Transverse colon (tissue), 4 donors: ENCODE measurements at regions of chr5 and their contacts with region 1.

Region 1: DNA sequence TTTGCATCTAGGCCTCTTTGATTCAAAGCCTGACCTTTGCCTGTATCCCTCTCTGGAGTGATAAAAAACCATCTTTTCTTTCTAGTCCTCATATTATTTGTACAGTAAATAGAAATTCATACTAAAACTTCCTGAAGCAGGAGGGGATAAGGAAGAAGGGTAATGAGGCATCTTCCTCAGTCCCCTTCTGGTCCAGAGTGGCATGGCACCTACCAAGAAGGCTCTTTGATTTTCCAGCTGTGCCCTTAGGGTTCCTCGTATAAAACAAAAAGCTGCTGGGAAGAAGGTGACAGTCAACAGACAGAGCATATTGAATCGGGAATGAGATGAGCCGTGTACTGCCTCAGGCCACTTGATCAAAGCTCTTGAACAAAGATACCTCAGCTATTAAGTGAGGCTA is 71.9 kb upstream of the SPDL1 start:
- DNase-seq: no peak
- H3K4me3 ChIP-seq: no peak overlapping the region
- H3K27ac ChIP-seq: no peak overlapping the region
- H3K4me1 ChIP-seq: no peaks in the 10 kb centered on the region
- H3K27me3 ChIP-seq: no peaks in the 10 kb centered on the region
- CTCF ChIP-seq: no peak
- EP300 ChIP-seq: no peak
- POLR2A ChIP-seq: no peak

Region 2: GRCh38 chr5:169548315-169548714 is 36.6 kb after region 1 on chr5:
- in situ Hi-C with region 1: no loop called
- intact Hi-C with region 1: loop called (anchors 2 kb)
- DNase-seq: no peak
- H3K4me3 ChIP-seq: no peak overlapping the region
- H3K27ac ChIP-seq: no peak overlapping the region
- H3K4me1 ChIP-seq: no peaks in the 10 kb centered on the region
- H3K27me3 ChIP-seq: peaks cover 5% of the 10 kb centered on the region
- CTCF ChIP-seq: peak in 3 of 5 experiments; percentile 15 to 20 (median 16)
- EP300 ChIP-seq: no peak
- POLR2A ChIP-seq: no peak